ENCODE measurements at regions of chr17 and their contacts with region 1.

Region 1: GRCh38 chr17:48131216-48131824 is 23.8 kb downstream of the SNX11 start:
- DNase-seq: peak in 13 of 14 experiments; percentile 6 to 81 (median 33)
- ATAC-seq: peak; percentile 89
- H3K4me3 ChIP-seq: no peak overlapping the region
- H3K4me3 Mint-ChIP-seq: no peak overlapping the region
- H3K27ac ChIP-seq: no peak overlapping the region
- H3K27ac Mint-ChIP-seq: peak overlapping the region; percentile 19
- H3K4me1 ChIP-seq: no peaks in the 10 kb centered on the region
- H3K4me1 Mint-ChIP-seq: no peaks in the 10 kb centered on the region
- H3K27me3 ChIP-seq: no peaks in the 10 kb centered on the region
- H3K27me3 Mint-ChIP-seq: no peaks in the 10 kb centered on the region
- CTCF ChIP-seq: peak; percentile 93

Region 2: GRCh38 chr17:48084932-48085444 is 46.3 kb before region 1 on chr17:
- CTCF ChIA-PET with region 1: interaction called, 7 read pairs
- POLR2A ChIA-PET with region 1: interaction called, 4 read pairs
- intact Hi-C with region 1: loop called (anchors 1 kb)
- DNase-seq: no peak
- ATAC-seq: no peak
- H3K4me3 ChIP-seq: no peak overlapping the region
- H3K4me3 Mint-ChIP-seq: no peak overlapping the region
- H3K27ac ChIP-seq: no peak overlapping the region
- H3K27ac Mint-ChIP-seq: no peak overlapping the region
- H3K4me1 ChIP-seq: no peaks in the 10 kb centered on the region
- H3K4me1 Mint-ChIP-seq: peaks cover 10% of the 10 kb centered on the region
- H3K27me3 ChIP-seq: no peaks in the 10 kb centered on the region
- H3K27me3 Mint-ChIP-seq: no peaks in the 10 kb centered on the region
- CTCF ChIP-seq: no peak

Region 3: DNA sequence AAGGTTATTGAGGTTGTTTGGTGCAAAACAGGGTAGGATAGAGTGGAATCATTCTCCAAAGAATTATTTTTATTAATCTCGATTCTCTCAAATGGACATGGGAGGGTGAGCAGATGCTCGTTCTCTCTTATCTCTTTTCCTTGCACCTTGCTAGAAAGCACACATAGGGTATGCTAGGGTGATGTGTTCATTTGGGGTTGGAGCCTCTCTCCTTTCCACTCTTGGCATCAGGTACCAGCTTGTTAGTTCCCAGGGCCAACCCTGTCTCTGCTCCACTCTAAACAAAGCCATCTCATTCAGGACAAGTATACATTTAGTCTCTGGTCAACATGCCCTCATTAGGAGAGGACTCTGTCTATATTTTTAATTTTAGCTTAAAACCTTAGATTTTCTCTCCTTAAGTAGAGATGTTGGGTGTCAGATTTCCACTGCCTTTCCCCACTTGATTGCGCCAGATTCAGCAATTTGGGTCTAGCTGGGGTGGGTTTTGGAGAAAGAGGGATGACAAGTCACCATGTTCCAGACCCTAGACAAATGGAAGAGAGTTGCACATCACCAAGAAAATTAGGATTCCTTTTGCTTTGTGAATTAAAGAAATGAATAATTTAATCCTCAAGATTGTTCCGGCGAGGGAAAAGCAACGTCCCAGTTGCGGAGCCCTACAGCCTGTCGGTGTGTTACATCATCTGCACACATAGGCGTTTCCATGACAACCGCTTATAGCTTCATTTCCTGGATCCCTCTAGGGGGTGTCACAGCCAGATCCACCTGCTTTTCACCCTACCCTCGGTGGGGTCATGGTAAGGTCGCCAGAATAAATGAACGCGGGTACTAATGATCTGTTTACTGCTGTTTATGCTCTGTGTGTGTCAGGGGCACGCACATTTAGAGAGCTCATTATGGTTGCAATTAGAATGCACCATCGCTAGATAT is 17.8 kb after region 1 on chr17:
- CTCF ChIA-PET with region 1: no interaction called
- POLR2A ChIA-PET with region 1: no interaction called
- intact Hi-C with region 1: no loop called
- DNase-seq: no peak
- ATAC-seq: peak; percentile 26
- H3K4me3 ChIP-seq: no peak overlapping the region
- H3K4me3 Mint-ChIP-seq: no peak overlapping the region
- H3K27ac ChIP-seq: no peak overlapping the region
- H3K27ac Mint-ChIP-seq: peak overlapping the region; percentile 63
- H3K4me1 ChIP-seq: no peaks in the 10 kb centered on the region
- H3K4me1 Mint-ChIP-seq: peaks cover 10% of the 10 kb centered on the region
- H3K27me3 ChIP-seq: no peaks in the 10 kb centered on the region
- H3K27me3 Mint-ChIP-seq: no peaks in the 10 kb centered on the region
- CTCF ChIP-seq: no peak

Region 4: DNA sequence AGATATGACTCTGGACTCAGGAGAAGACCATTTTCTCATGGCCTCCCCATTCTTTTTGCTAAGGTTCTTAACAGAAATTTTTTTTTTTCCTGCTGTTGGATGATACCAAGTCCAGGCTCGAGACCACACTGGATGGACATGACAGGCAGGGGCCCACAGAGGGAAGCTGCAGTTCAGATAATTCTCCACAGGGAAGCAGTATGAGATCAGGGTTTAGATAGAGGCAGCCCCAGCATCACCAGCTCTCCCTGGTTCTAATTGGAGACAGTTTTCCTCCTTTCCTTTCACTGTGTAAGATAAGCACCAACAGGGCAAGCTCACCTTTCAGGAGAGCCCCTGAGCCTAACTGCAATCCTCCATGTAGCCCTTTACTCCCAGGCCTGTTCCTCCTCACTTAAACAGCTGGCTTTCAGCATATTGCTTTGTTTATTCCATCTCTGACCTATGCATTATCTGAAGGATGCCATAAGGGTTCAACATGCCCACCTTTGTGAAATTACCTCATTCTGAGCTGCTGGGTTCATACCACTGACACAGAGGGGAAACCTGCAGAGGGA is 84.3 kb after region 1 on chr17:
- CTCF ChIA-PET with region 1: no interaction called
- POLR2A ChIA-PET with region 1: no interaction called
- intact Hi-C with region 1: no loop called
- DNase-seq: peak in 1 of 14 experiments; percentile 11
- ATAC-seq: no peak
- H3K4me3 ChIP-seq: no peak overlapping the region
- H3K4me3 Mint-ChIP-seq: no peak overlapping the region
- H3K27ac ChIP-seq: no peak overlapping the region
- H3K27ac Mint-ChIP-seq: peak overlapping the region; percentile 17
- H3K4me1 ChIP-seq: no peaks in the 10 kb centered on the region
- H3K4me1 Mint-ChIP-seq: peaks cover 18% of the 10 kb centered on the region
- H3K27me3 ChIP-seq: no peaks in the 10 kb centered on the region
- H3K27me3 Mint-ChIP-seq: no peaks in the 10 kb centered on the region
- CTCF ChIP-seq: no peak